ENCODE measurements at regions of chr20 and their contacts with region 1.

Region 1: DNA sequence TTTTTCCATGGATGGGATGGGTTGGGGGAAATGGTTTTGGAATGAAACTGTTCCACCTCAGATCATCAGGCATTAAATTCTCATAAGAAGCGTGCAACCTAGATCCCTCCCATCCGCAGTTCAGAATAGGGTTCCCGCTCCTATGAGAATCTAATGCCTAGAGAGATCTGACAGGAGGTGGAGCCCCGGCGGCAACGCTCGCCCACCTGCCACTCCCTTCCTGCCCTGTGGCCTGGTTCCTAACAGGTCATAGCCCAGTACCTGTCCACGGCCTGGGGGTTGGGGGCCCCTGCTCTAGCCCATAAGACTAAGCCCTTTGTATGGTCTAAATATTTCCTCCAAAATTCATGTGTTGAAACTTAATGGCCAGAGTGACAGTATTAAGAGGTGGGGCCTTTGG is 92.3 kb upstream of the SALL4 start:
- DNase-seq: no peak
- H3K4me3 Mint-ChIP-seq: no peak overlapping the region
- H3K27ac Mint-ChIP-seq: no peak overlapping the region
- H3K4me1 Mint-ChIP-seq: no peaks in the 10 kb centered on the region
- H3K27me3 Mint-ChIP-seq: peaks cover 1% of the 10 kb centered on the region

Region 2: GRCh38 chr20:51815018-51815761 is 79.4 kb before region 1 on chr20:
- intact Hi-C with region 1: no loop called
- DNase-seq: no peak
- H3K4me3 Mint-ChIP-seq: no peak overlapping the region
- H3K27ac Mint-ChIP-seq: no peak overlapping the region
- H3K4me1 Mint-ChIP-seq: no peaks in the 10 kb centered on the region
- H3K27me3 Mint-ChIP-seq: peaks cover 3% of the 10 kb centered on the region

Region 3: DNA sequence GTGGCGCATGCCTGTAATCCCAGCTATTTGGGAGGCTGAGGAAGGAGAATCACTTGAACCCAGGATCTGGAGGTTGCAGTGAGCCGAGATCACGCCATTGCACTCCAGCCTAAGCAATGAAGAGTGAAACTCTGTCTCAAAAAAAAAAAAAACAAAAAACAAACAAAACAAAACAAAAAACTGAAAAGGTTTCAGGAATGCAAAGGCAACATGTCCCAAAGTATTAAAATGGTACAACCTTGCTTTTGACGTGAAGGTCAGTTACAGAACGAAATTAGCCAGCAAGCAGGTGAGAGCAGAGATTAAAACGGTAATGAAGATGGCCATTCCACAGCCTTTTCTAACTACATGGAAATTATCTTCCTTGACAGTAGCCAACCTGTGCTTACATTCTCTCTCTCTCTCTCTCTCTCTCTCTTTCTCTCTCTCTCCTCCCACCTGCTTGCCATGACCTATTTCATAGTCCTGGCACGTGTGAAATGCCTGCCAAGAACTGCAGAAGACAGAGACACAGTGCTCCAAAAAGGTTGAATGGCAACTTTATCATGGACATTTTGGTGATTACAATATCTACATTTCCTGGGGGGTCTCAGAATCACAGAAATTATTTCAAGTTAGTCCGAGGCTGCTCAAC is 53.9 kb before region 1 on chr20:
- intact Hi-C with region 1: loop called (anchors 2 kb)
- DNase-seq: no peak
- H3K4me3 Mint-ChIP-seq: no peak overlapping the region
- H3K27ac Mint-ChIP-seq: no peak overlapping the region
- H3K4me1 Mint-ChIP-seq: no peaks in the 10 kb centered on the region
- H3K27me3 Mint-ChIP-seq: no peaks in the 10 kb centered on the region

Region 4: GRCh38 chr20:51910321-51911053 is 15.9 kb after region 1 on chr20:
- intact Hi-C with region 1: no loop called
- DNase-seq: no peak
- H3K4me3 Mint-ChIP-seq: no peak overlapping the region
- H3K27ac Mint-ChIP-seq: no peak overlapping the region
- H3K4me1 Mint-ChIP-seq: no peaks in the 10 kb centered on the region
- H3K27me3 Mint-ChIP-seq: peaks cover 5% of the 10 kb centered on the region

Region 5: DNA sequence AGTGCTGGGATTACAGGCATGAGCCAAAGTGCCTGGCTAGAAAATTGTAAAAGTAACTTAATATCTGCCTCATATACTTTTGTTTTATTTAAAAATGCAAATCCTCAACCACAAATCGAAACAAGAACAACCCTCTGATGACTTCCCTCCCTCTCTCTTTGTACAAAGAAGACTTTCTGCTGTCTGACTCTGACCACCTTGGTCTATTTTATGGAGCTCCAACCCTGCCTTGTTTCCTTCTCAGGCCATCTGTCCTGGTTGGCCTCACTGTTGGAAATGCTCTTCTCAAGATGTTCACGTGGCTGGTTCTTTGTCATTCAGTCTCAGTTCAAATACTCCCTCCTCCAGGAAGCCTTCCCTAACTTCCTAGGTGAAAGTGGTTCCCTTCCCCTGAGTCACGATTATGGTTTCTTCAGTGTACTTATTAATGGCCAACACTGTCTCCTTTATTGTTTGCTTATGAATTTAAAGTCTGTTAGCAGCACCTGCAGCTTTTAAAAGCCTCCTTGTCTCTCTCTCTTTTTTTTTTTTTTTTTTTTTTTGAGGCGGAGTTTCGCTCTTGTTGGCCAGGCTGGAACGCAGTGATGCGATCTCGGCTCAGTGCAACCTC is 59.2 kb after region 1 on chr20:
- intact Hi-C with region 1: no loop called
- DNase-seq: no peak
- H3K4me3 Mint-ChIP-seq: no peak overlapping the region
- H3K27ac Mint-ChIP-seq: no peak overlapping the region
- H3K4me1 Mint-ChIP-seq: peaks cover 2% of the 10 kb centered on the region
- H3K27me3 Mint-ChIP-seq: peaks cover 10% of the 10 kb centered on the region

Region 6: DNA sequence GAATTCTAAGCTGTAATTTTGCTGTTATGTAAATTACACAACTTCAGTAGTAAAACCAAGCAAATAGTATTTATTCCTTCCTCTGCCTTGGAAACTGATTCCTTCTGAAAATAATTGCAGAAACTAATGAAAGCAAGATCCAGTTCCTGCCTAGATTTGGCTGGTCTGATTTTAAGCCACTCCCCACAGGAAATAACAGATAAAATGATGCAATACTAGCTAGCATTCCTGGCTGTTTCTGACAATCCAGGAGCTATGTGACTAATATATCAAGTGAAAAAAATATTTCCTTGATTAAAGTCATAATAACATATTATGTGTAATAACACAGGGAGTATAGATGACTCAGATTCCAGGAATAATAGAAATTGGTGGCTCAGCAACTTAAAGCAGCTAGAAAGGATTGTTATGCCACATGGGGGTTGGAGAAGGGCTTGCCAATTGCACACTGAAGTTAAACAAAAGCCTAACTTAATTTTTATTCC is 90.4 kb after region 1 on chr20:
- intact Hi-C with region 1: no loop called
- DNase-seq: no peak
- H3K4me3 Mint-ChIP-seq: no peak overlapping the region
- H3K27ac Mint-ChIP-seq: no peak overlapping the region
- H3K4me1 Mint-ChIP-seq: no peaks in the 10 kb centered on the region
- H3K27me3 Mint-ChIP-seq: no peaks in the 10 kb centered on the region